Adrenal gland (tissue), 19 donors: ENCODE measurements at regions of chr7 and their contacts with region 1.

Region 1: GRCh38 chr7:150787321-150788281 is 12.6 kb downstream of the TMEM176B start:
- DNase-seq: peak in 6 of 7 donors; percentile 42 to 70 (median 50)
- H3K4me3 ChIP-seq: no peak overlapping the region
- H3K27ac ChIP-seq: peak overlapping the region in 4 of 5 donors; percentile 47 to 85 (median 56)
- H3K4me1 ChIP-seq: peaks cover 11 to 28% of the 10 kb centered on the region in 2 donors
- H3K27me3 ChIP-seq: no peaks in the 10 kb centered on the region
- CTCF ChIP-seq: no peak
- POLR2A ChIP-seq: no peak

Region 2: DNA sequence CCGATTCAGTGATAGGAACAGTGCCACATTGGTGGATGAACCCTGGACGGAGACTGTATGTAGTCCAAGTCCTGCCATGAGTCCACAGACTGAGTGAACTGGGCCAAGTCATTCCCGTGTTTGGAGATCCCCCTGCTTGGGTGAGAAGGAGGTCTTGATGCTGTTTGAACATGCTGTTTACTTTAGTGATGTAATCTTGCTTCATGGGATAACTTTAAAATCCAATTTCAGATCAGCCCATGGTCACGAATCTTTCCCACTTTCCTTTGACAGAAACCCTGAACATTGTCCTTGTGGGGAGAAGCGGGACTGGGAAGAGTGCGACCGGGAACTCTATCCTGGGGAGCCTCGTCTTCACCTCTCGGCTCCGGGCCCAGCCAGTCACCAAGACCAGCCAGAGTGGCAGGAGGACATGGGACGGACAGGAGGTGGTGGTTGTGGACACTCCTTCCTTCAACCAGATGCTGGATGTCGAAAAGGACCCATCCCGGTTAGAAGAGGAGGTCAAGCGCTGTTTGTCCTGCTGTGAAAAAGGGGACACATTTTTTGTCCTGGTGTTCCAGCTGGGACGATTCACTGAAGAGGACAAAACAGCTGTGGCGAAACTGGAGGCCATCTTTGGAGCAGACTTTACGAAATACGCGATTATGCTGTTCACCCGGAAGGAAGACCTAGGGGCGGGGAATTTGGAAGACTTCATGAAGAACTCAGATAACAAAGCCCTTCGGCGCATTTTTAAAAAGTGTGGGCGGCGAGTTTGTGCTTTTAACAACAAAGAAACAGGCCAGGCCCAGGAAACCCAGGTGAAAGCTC is 310.6 kb before region 1 on chr7:
- intact Hi-C with region 1: no loop called
- DNase-seq: no peak
- H3K4me3 ChIP-seq: no peak overlapping the region
- H3K27ac ChIP-seq: no peak overlapping the region
- H3K4me1 ChIP-seq: peaks cover 0 to 6% of the 10 kb centered on the region in 2 donors
- H3K27me3 ChIP-seq: no peaks in the 10 kb centered on the region
- CTCF ChIP-seq: no peak
- POLR2A ChIP-seq: no peak

Region 3: DNA sequence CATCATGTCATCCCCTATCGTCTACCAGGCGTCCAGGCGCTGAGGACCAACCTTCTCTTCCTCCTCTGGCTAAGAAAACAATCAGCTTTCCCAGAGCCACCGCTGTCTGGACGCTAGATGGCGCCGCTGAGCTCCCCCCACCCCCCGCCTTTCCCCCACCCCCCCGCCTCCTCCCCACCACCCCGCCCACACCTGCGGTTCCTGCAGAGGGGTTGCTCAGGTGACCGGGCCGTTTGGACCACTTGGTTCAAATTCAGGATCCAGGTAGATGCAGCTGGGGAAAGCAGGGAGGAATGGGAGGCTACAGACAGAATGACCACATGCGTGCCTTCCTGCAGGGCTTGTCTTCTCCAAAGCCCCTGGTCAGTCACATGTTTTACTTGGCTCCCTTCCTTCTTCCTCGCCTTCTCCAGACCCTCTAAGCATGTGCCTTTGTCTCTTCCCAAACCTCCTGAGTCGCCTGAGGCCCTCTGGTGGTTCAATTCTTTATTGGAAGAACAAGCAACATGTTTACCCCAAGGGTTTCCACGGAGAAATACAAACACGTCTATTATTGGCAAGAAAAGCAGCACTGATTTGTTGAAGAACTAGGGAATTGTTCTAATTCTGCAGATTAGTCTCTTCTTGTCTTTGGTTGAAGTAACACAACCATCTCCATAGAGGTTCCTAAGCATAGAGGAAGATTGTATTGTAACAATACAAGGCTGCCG is 89.4 kb after region 1 on chr7:
- intact Hi-C with region 1: loop called in 1 of 2 experiments (anchors 10 kb)
- DNase-seq: peak; percentile 45 to 74 (median 60)
- H3K4me3 ChIP-seq: no peak overlapping the region
- H3K27ac ChIP-seq: no peak overlapping the region
- H3K4me1 ChIP-seq: peaks cover 0 to 4% of the 10 kb centered on the region in 2 donors
- H3K27me3 ChIP-seq: no peaks in the 10 kb centered on the region
- CTCF ChIP-seq: peak; percentile 18 to 69 (median 56)
- POLR2A ChIP-seq: no peak

Region 4: GRCh38 chr7:150988230-150989226 is 200.9 kb after region 1 on chr7:
- intact Hi-C with region 1: loop called (anchors 10 kb)
- DNase-seq: peak in 6 of 7 donors; percentile 47 to 81 (median 62)
- H3K4me3 ChIP-seq: no peak overlapping the region
- H3K27ac ChIP-seq: peak overlapping the region in 2 of 5 donors; percentile 66 to 80
- H3K4me1 ChIP-seq: no peaks in the 10 kb centered on the region
- H3K27me3 ChIP-seq: no peaks in the 10 kb centered on the region
- CTCF ChIP-seq: peak; percentile 72 to 92 (median 84)
- POLR2A ChIP-seq: no peak

Region 5: DNA sequence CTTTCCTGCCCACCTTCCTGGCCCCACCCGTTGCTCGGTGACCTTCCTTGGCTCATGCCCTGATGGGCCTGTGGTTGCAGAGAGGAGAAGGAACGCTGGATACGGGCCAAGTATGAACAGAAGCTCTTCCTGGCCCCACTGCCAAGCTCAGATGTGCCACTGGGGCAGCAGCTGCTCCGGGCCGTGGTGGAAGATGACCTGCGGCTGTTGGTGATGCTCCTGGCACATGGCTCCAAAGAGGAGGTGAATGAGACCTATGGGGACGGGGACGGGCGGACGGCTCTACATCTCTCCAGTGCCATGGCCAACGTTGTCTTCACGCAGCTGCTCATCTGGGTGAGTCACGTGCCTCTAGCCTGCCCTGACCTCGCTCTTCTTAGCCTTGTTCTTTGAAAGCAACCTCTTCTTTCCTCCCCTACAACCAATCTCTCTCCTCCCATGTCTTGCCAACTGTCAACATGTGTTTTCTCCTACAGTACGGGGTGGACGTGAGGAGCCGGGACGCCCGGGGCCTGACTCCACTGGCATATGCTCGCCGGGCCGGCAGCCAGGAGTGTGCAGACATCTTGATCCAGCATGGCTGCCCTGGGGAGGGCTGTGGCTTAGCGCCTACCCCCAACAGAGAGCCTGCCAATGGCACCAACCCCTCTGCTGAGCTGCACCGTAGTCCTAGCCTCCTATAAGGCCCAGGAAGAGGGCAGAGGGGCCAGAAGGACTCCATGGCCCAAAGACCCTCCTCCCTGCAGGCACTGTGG is 355.8 kb after region 1 on chr7:
- intact Hi-C with region 1: no loop called
- DNase-seq: peak in 2 of 7 donors; percentile 13 to 50
- H3K4me3 ChIP-seq: no peak overlapping the region
- H3K27ac ChIP-seq: no peak overlapping the region
- H3K4me1 ChIP-seq: no peaks in the 10 kb centered on the region
- H3K27me3 ChIP-seq: no peaks in the 10 kb centered on the region
- CTCF ChIP-seq: no peak
- POLR2A ChIP-seq: no peak